ENCODE measurements at regions of chr7 and their contacts with region 1.

Region 1: GRCh38 chr7:25216837-25217236 is 11.4 kb downstream of the NPVF start:
- H3K4me3 ChIP-seq: no peak overlapping the region
- H3K27ac ChIP-seq: no peak overlapping the region
- H3K4me1 ChIP-seq: no peaks in the 10 kb centered on the region
- CTCF ChIP-seq: no peak

Region 2: GRCh38 chr7:25206765-25207164 is 10.1 kb before region 1 on chr7:
- CTCF ChIA-PET with region 1: interaction called, 19 read pairs
- POLR2A ChIA-PET with region 1: no interaction called
- H3K4me3 ChIP-seq: no peak overlapping the region
- H3K27ac ChIP-seq: no peak overlapping the region
- H3K4me1 ChIP-seq: no peaks in the 10 kb centered on the region
- CTCF ChIP-seq: no peak

Region 3: DNA sequence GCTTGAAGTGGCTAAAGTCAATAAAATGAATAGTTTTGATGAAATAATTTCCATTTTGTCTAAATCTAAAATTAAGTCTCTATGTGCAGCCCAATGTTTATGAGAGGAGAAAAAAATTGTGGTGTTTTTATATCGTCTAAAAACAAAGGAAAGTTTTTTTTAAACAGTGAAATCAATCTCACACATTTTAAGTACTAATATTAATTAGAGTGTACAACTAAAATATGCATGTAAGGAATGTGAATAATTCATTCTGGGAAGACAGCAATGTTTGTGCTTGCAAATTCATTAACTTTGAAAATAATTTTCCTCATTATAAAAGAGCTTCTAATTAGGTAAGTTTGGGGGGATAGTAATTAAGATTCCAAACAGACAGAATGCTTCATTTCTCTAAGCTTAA is 11.5 kb after region 1 on chr7 and contains the start of gene NPVF:
- CTCF ChIA-PET with region 1: interaction called, 26 read pairs
- POLR2A ChIA-PET with region 1: no interaction called
- H3K4me3 ChIP-seq: no peak within 1 kb of the TSS
- H3K27ac ChIP-seq: no peak within 1 kb of the TSS
- H3K4me1 ChIP-seq: no peaks in the 10 kb centered on the region
- CTCF ChIP-seq: no peak

Region 4: DNA sequence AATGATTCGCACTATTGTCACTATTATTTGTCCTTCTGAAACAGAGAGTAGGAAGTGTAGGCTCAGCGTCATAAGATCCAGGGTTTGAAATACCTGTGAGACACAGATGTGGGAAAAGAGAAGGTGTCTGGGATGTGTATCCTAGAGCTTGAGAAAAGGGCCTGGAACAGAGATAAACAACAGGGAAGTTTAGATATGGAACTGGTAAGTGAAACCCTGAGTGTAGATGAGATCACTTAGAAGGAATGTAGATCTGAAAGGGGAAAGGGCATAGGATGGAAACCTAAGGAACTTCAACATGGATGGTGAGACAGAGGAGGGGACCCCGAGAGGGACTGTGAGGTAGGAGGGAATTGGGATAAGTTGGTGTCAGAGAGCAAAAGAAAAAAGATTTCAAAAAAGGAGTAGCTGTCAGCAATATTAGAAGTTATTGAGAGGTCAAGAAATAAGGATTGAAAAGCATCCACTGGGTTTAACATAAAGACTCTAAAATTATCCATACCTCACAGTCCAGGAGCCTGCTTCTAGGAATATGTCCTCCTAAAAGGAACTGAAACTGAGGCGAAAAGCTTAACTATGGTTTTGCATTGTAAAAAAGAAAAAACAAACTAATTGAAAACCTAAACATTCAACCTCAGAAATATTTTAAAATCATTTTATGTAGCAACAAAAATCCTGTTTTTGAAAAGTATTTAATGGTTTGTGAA is 130.7 kb after region 1 on chr7:
- CTCF ChIA-PET with region 1: no interaction called
- POLR2A ChIA-PET with region 1: no interaction called
- H3K4me3 ChIP-seq: no peak overlapping the region
- H3K27ac ChIP-seq: no peak overlapping the region
- H3K4me1 ChIP-seq: no peaks in the 10 kb centered on the region
- CTCF ChIP-seq: no peak

Region 5: GRCh38 chr7:25549271-25549921 is 332.6 kb after region 1 on chr7:
- CTCF ChIA-PET with region 1: interaction called, 10 read pairs
- POLR2A ChIA-PET with region 1: no interaction called
- H3K4me3 ChIP-seq: no peak overlapping the region
- H3K27ac ChIP-seq: no peak overlapping the region
- H3K4me1 ChIP-seq: no peaks in the 10 kb centered on the region
- CTCF ChIP-seq: no peak